HAP-1 (cell line): ENCODE measurements at regions of chrX and their contacts with region 1.

Region 1: GRCh38 chrX:84729809-84730208 is 227.6 kb upstream of the HDX start:
- DNase-seq: peak; percentile 59 to 74
- H3K4me3 ChIP-seq: no peak overlapping the region
- H3K4me1 ChIP-seq: peaks cover 5% of the 10 kb centered on the region
- H3K27me3 ChIP-seq: no peaks in the 10 kb centered on the region

Region 2: GRCh38 chrX:84634201-84634782 is 95.5 kb before region 1 on chrX:
- in situ Hi-C with region 1: no loop called
- DNase-seq: peak in 1 of 2 experiments; percentile 21
- H3K4me3 ChIP-seq: no peak overlapping the region
- H3K4me1 ChIP-seq: no peaks in the 10 kb centered on the region
- H3K27me3 ChIP-seq: no peaks in the 10 kb centered on the region

Region 3: GRCh38 chrX:84907324-84907968 is 177.6 kb after region 1 on chrX:
- in situ Hi-C with region 1: loop called (anchors 10 kb)
- DNase-seq: peak in 1 of 2 experiments; percentile 57
- H3K4me3 ChIP-seq: no peak overlapping the region
- H3K4me1 ChIP-seq: peaks cover 2% of the 10 kb centered on the region
- H3K27me3 ChIP-seq: no peaks in the 10 kb centered on the region

Region 4: GRCh38 chrX:85052636-85053343 is 323.0 kb after region 1 on chrX:
- in situ Hi-C with region 1: loop called (anchors 10 kb)
- DNase-seq: peak in 1 of 2 experiments; percentile 42
- H3K4me3 ChIP-seq: no peak overlapping the region
- H3K4me1 ChIP-seq: peaks cover 24% of the 10 kb centered on the region
- H3K27me3 ChIP-seq: no peaks in the 10 kb centered on the region

Region 5: DNA sequence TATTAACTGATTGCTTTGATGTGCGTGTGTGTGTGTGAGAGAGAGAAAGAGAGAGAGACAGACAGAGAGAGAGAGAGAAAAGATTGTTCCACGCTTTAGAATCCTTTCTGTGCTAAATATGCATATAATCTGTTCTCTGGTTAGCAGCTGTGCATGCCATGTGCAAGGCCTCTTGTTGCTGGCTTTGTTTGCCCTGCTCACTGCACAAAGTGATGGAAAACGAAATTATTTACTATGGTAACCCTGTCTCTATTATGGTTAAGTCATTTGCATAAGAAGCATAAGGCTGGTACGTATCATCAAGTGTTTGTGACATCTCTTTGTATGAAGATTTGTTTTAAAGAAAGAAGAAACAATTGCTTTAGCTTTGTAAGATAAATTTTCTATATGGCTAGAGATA is 839.9 kb after region 1 on chrX:
- in situ Hi-C with region 1: loop called (anchors 25 kb)
- DNase-seq: peak; percentile 83 to 99
- H3K4me3 ChIP-seq: no peak overlapping the region
- H3K4me1 ChIP-seq: peaks cover 32% of the 10 kb centered on the region
- H3K27me3 ChIP-seq: no peaks in the 10 kb centered on the region